AG04450 (cell line): ENCODE measurements at regions of chr9 and their contacts with region 1.

Region 1: DNA sequence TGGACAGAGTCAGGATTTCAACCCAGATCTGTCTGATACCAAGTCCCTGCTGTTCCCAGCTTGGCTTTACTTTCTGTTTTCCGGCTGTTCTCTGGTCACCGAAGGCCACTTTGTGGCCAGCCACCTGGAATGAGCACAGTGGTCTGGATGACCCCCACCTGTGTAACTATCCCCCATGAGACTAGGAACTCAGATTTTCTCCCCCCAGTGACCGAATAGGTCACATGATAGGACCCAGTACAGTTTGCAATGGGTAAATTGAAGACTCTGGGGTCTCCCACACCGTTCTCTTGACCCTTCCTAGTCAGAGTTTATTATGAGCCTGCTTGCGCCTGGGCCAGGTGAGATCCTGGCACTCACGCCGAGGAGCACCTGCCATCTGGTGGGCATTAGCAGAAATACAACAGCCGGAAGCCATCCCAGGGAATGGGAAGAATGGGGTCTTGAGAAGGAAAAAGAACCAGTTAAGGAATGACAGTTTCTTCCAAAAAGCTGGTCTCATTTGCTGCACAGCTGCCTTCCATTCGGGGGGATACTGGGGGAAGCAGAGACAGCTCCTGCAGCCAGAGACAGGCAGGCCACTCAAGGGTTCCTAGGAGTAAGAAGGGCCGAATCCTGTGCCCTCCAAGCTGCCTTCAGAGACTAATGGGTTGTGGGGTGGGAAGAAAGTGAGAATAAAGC is 7.1 kb downstream of the PHYHD1 start:
- DNase-seq: no peak
- H3K4me3 ChIP-seq: no peak overlapping the region
- H3K27ac ChIP-seq: peak overlapping the region; percentile 31
- H3K27me3 ChIP-seq: no peaks in the 10 kb centered on the region
- CTCF ChIP-seq: peak; percentile 89

Region 2: DNA sequence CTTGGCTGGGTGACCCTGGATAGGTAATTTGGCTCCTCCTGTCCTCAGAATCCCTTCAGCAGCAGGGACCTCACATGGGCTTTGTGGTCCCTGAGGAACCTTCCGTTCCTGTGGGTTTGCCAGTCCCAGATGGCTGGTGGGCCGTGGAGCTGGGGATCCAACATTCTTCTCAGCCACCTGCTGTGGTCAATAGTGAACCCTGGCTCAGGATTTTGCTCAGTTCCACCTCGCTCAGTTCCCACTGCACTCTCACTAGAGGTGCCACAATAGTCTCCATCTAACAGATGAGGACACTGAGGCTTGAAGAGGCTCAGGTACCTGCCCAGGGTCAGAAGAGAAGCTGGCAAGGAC is 81.2 kb before region 1 on chr9:
- CTCF ChIA-PET with region 1: interaction called, 10 read pairs
- POLR2A ChIA-PET with region 1: no interaction called
- DNase-seq: no peak
- H3K4me3 ChIP-seq: no peak overlapping the region
- H3K27ac ChIP-seq: no peak overlapping the region
- H3K27me3 ChIP-seq: no peaks in the 10 kb centered on the region
- CTCF ChIP-seq: no peak

Region 3: GRCh38 chr9:128863647-128864046 is 64.2 kb before region 1 on chr9:
- CTCF ChIA-PET with region 1: interaction called, 95 read pairs
- POLR2A ChIA-PET with region 1: no interaction called
- DNase-seq: no peak
- H3K4me3 ChIP-seq: no peak overlapping the region
- H3K27ac ChIP-seq: no peak overlapping the region
- H3K27me3 ChIP-seq: no peaks in the 10 kb centered on the region
- CTCF ChIP-seq: peak; percentile 84

Region 4: GRCh38 chr9:128870128-128870952 is 57.5 kb before region 1 on chr9:
- CTCF ChIA-PET with region 1: interaction called, 95 read pairs
- POLR2A ChIA-PET with region 1: no interaction called
- DNase-seq: no peak
- H3K4me3 ChIP-seq: no peak overlapping the region
- H3K27ac ChIP-seq: no peak overlapping the region
- H3K27me3 ChIP-seq: no peaks in the 10 kb centered on the region
- CTCF ChIP-seq: no peak